Left cardiac atrium (tissue), 4 donors: ENCODE measurements at regions of chr20 and their contacts with region 1.

Region 1: DNA sequence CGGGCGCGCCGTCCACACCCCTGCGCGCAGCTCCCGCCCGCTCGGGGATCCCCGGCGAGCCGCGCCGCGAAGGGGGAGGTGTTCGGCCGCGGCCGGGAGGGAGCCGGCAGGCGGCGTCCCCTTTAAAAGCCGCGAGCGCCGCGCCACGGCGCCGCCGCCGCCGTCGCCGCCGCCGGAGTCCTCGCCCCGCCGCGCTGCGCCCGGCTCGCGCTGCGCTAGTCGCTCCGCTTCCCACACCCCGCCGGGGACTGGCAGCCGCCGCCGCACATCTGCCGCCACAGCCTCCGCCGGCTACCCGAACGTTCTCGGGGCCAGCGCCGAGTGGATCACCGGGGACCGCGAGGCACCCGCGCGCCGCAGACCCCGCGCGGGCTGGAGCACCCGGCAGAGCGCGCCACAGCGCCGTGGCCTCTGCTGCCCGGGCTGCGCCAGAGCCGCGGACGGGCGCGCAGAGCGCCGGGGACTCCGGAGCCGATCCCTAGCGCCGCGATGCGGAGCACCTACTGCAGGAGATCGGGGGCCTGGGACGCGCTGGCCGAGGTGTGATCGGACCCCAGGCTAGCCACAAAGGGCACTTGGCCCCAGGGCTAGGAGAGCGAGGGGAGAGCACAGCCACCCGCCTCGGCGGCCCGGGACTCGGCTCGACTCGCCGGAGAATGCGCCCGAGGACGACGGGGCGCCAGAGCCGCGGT is at the start of gene BMP2:
- DNase-seq: peak; percentile 60
- ATAC-seq: peak; percentile 64 to 81
- total RNA-seq, gene BMP2: 4.7 to 6.1 TPM

Region 2: GRCh38 chr20:6265204-6265904 is 502.3 kb before region 1 on chr20:
- intact Hi-C with region 1: loop called in 1 of 2 experiments (anchors 10 kb)
- DNase-seq: no peak
- ATAC-seq: peak; percentile 79 to 92

Region 3: GRCh38 chr20:6636209-6637159 is 131.2 kb before region 1 on chr20:
- intact Hi-C with region 1: loop called in 1 of 2 experiments (anchors 10 kb)
- DNase-seq: no peak
- ATAC-seq: peak; percentile 83 to 93

Region 4: GRCh38 chr20:7285918-7286556 is 518.4 kb after region 1 on chr20:
- intact Hi-C with region 1: loop called in 1 of 2 experiments (anchors 10 kb)
- DNase-seq: peak; percentile 82
- ATAC-seq: peak; percentile 83 to 88